Mammary epithelial cell (primary cell): ENCODE measurements at regions of chr17 and their contacts with region 1.

Region 1: GRCh38 chr17:7856883-7857723 is at the start of gene NAA38:
- DNase-seq: peak; percentile 99
- H3K4me3 ChIP-seq: peak within 1 kb of the TSS; percentile 58 to 85 (median 77)
- H3K27ac ChIP-seq: peak within 1 kb of the TSS; percentile 92
- H3K4me1 ChIP-seq: peaks cover 40% of the 10 kb centered on the region
- H3K27me3 ChIP-seq: no peaks in the 10 kb centered on the region
- CTCF ChIP-seq: peak; percentile 9 to 58
- total RNA-seq, gene NAA38: 28.2 to 81.5 TPM

Region 2: DNA sequence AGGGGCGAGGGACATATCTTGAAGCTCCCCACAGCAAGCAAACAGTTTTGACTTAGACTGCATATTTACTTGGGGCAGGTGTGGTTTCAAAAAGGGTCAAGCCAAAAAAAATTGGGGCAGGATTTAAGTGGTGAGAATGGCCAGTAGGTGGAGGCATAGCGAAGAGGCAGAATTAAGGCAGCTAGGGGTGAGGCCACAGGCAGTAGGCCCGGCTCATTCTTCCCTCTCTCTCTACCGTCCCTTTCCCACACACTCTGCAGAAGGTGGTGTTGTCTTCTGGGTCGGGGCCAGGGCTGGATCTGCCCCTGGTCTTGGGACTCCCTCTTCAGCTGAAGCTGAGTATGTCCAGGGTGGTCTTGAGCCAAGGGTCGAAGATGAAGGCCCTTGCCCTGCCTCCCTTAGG is 224.6 kb before region 1 on chr17:
- CTCF ChIA-PET with region 1: no interaction called
- dilution Hi-C with region 1: no loop called
- in situ Hi-C with region 1: no loop called
- intact Hi-C with region 1: loop called (anchors 10 kb)
- DNase-seq: peak; percentile 39
- H3K4me3 ChIP-seq: no peak overlapping the region
- H3K27ac ChIP-seq: no peak overlapping the region
- H3K4me1 ChIP-seq: peaks cover 2% of the 10 kb centered on the region
- H3K27me3 ChIP-seq: no peaks in the 10 kb centered on the region
- CTCF ChIP-seq: peak; percentile 61 to 77

Region 3: DNA sequence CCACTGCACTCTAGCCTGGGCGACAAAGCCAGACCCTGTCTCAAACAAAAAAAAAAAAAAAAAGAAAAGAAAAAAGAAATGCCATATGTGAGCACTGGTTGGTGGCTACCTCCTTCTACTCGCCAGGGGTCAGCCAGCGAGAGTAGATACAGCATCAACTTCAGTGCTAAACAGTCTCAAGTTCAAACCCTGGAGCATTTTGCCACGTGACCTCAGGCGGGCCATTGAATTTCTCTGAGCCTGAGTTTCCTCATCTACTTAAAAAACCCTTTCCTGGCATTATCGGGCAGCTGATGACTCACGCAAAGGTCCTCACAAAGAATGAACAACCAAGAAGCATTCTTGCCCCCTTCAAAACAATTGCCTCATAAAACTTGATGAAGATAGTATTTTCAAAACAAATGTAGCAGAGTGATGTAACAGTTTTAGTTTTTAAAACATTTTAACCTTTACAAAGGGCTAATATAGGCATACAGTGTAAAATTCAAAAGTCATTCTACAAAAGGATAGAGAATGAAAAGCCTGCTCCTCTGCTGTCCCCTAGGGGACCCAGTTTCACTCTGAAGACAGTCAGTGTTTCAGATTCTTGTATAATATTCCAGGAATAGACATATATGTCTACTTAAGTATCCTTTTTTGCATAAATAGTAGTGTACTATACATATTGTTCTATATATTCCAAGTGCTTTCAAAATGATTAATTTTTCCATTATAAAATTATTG is 111.2 kb before region 1 on chr17:
- CTCF ChIA-PET with region 1: no interaction called
- dilution Hi-C with region 1: no loop called
- in situ Hi-C with region 1: loop called in 1 of 2 experiments (anchors 10 kb)
- intact Hi-C with region 1: loop called (anchors 1 kb)
- DNase-seq: peak; percentile 60
- H3K4me3 ChIP-seq: no peak overlapping the region
- H3K27ac ChIP-seq: peak overlapping the region; percentile 12
- H3K4me1 ChIP-seq: peaks cover 45% of the 10 kb centered on the region
- H3K27me3 ChIP-seq: no peaks in the 10 kb centered on the region
- CTCF ChIP-seq: peak in 1 of 2 donors; percentile 13

Region 4: GRCh38 chr17:7834962-7835813 is 21.9 kb before region 1 on chr17:
- CTCF ChIA-PET with region 1: interaction called, 5 read pairs
- dilution Hi-C with region 1: no loop called
- in situ Hi-C with region 1: no loop called
- intact Hi-C with region 1: loop called (anchors 1 kb)
- DNase-seq: peak; percentile 98
- H3K4me3 ChIP-seq: peak overlapping the region; percentile 69 to 94 (median 76)
- H3K27ac ChIP-seq: peak overlapping the region; percentile 97
- H3K4me1 ChIP-seq: peaks cover 43% of the 10 kb centered on the region
- H3K27me3 ChIP-seq: no peaks in the 10 kb centered on the region
- CTCF ChIP-seq: peak; percentile 52 to 90

Region 5: GRCh38 chr17:7897773-7898172 is 40.7 kb after region 1 on chr17:
- CTCF ChIA-PET with region 1: interaction called, 4 read pairs
- dilution Hi-C with region 1: no loop called
- in situ Hi-C with region 1: loop called in 1 of 2 experiments (anchors 5 kb)
- intact Hi-C with region 1: loop called (anchors 1 kb)
- DNase-seq: peak; percentile 31
- H3K4me3 ChIP-seq: no peak overlapping the region
- H3K27ac ChIP-seq: no peak overlapping the region
- H3K4me1 ChIP-seq: no peaks in the 10 kb centered on the region
- H3K27me3 ChIP-seq: no peaks in the 10 kb centered on the region
- CTCF ChIP-seq: peak; percentile 27 to 51